GM12878 (cell line): ENCODE measurements at regions of chr1 and their contacts with region 1.

Region 1: GRCh38 chr1:99751877-99752504 is 14.4 kb downstream of the FRRS1 start:
- DNase-seq: peak; percentile 73
- ATAC-seq: peak; percentile 77
- H3K4me3 ChIP-seq: no peak overlapping the region
- H3K27ac ChIP-seq: peak overlapping the region; percentile 80
- H3K4me1 ChIP-seq: peaks cover 32% of the 10 kb centered on the region
- H3K27me3 ChIP-seq: no peaks in the 10 kb centered on the region
- CTCF ChIP-seq: no peak
- EP300 ChIP-seq: no peak; a peak in 1 of 4 replicates
- POLR2A ChIP-seq: no peak
- RAD21 ChIP-seq: no peak

Region 2: DNA sequence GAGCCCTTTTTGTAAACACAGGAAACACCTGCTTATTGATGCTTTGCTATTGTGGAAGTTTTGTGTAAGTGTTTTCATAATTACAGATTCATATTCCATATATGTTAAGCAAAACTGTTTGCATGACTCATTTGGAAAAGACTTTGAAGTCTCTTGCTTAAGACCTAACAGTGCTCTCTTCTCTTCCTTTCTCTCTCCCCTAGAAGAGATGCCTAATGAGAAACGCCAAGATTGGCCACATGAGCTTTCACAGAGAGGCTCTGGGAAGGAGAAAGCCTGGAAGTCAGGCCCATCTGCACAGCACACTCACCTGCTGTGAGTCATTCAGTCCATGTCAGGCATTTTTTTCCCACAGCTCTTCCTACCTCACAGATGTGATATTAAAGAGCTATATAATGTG is 207.7 kb before region 1 on chr1:
- CTCF ChIA-PET with region 1: no interaction called
- POLR2A ChIA-PET with region 1: no interaction called
- RAD21 ChIA-PET with region 1: no interaction called
- SMC1A ChIA-PET with region 1: no interaction called
- in situ Hi-C with region 1: no loop called
- intact Hi-C with region 1: no loop called
- DNase-seq: no peak
- ATAC-seq: peak; percentile 58
- H3K4me3 ChIP-seq: no peak overlapping the region
- H3K27ac ChIP-seq: no peak overlapping the region
- H3K4me1 ChIP-seq: no peaks in the 10 kb centered on the region; the same call in 1 of the 2 replicates
- H3K27me3 ChIP-seq: no peaks in the 10 kb centered on the region
- CTCF ChIP-seq: no peak
- EP300 ChIP-seq: no peak
- POLR2A ChIP-seq: no peak
- RAD21 ChIP-seq: no peak

Region 3: GRCh38 chr1:99645699-99646531 is 106.1 kb before region 1 on chr1 and contains the start of gene PALMD:
- CTCF ChIA-PET with region 1: no interaction called
- POLR2A ChIA-PET with region 1: no interaction called
- RAD21 ChIA-PET with region 1: no interaction called
- SMC1A ChIA-PET with region 1: no interaction called
- in situ Hi-C with region 1: no loop called
- intact Hi-C with region 1: no loop called
- DNase-seq: no peak
- ATAC-seq: peak; percentile 54
- H3K4me3 ChIP-seq: no peak within 1 kb of the TSS
- H3K27ac ChIP-seq: no peak within 1 kb of the TSS
- H3K4me1 ChIP-seq: no peaks in the 10 kb centered on the region
- H3K27me3 ChIP-seq: 0 out of 4 replicates have a peak, but pooled peaks cover 0 to 3% of the 10 kb centered on the region in 2 experiments
- CTCF ChIP-seq: no peak
- EP300 ChIP-seq: no peak
- POLR2A ChIP-seq: no peak
- RAD21 ChIP-seq: no peak
- polyA plus RNA-seq, gene PALMD: 0.03 TPM in 1 of 2 experiments, not detected in the other

Region 4: GRCh38 chr1:99738858-99739465 is 13.0 kb before region 1 on chr1:
- CTCF ChIA-PET with region 1: interaction called, 3 read pairs
- POLR2A ChIA-PET with region 1: interaction called, 10 read pairs
- RAD21 ChIA-PET with region 1: interaction called, 4 read pairs
- SMC1A ChIA-PET with region 1: interaction called, 11 read pairs
- in situ Hi-C with region 1: no loop called
- intact Hi-C with region 1: no loop called
- DNase-seq: no peak
- ATAC-seq: no peak
- H3K4me3 ChIP-seq: no peak overlapping the region
- H3K27ac ChIP-seq: no peak overlapping the region
- H3K4me1 ChIP-seq: no peaks in the 10 kb centered on the region
- H3K27me3 ChIP-seq: no peaks in the 10 kb centered on the region
- CTCF ChIP-seq: no peak
- EP300 ChIP-seq: no peak
- POLR2A ChIP-seq: no peak
- RAD21 ChIP-seq: no peak

Region 5: DNA sequence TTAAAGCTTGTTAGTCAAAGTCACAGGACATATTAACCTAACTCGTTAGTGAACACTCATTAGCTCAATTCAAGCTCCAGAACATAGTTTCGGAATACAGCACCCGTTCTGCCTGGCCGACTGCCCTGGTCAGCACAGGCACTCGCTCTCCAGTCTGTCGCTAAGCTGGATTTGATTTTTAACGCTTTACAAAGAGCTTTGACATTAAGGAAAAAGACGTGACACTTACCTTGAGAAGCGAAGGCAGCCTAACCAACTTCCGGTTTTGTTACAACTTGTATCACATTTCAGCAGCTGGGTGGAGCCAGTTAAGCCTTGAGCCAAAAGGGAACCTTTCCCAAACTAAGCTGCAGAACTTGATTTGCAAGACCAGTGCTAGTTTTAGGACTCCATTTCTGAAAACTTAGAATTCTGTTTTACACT is 14.4 kb after region 1 on chr1 and contains the start of gene FRRS1:
- CTCF ChIA-PET with region 1: interaction called, 40 read pairs
- POLR2A ChIA-PET with region 1: interaction called, 17 read pairs
- RAD21 ChIA-PET with region 1: interaction called, 25 read pairs
- SMC1A ChIA-PET with region 1: interaction called, 99 read pairs
- in situ Hi-C with region 1: no loop called
- intact Hi-C with region 1: no loop called
- DNase-seq: peak; percentile 85
- ATAC-seq: peak; percentile 86
- H3K4me3 ChIP-seq: peak within 1 kb of the TSS; percentile 96
- H3K27ac ChIP-seq: peak within 1 kb of the TSS; percentile 90
- H3K4me1 ChIP-seq: peaks cover under 1% of the 10 kb centered on the region; the same call in 1 of the 2 replicates
- H3K27me3 ChIP-seq: no peaks in the 10 kb centered on the region
- CTCF ChIP-seq: peak in 2 of 3 experiments; percentile 5 to 19; a peak in 2 of 6 replicates
- EP300 ChIP-seq: no peak
- POLR2A ChIP-seq: peak; percentile 58
- RAD21 ChIP-seq: peak; percentile 13; the same call in 1 of the 2 replicates
- polyA plus RNA-seq, gene FRRS1: 0.22 to 0.55 TPM

Region 6: GRCh38 chr1:99811075-99811474 is 59.1 kb after region 1 on chr1:
- CTCF ChIA-PET with region 1: no interaction called
- POLR2A ChIA-PET with region 1: no interaction called
- RAD21 ChIA-PET with region 1: no interaction called
- SMC1A ChIA-PET with region 1: no interaction called
- in situ Hi-C with region 1: no loop called
- intact Hi-C with region 1: no loop called
- DNase-seq: no peak
- ATAC-seq: no peak
- H3K4me3 ChIP-seq: no peak overlapping the region
- H3K27ac ChIP-seq: no peak overlapping the region
- H3K4me1 ChIP-seq: peaks cover 10% of the 10 kb centered on the region
- H3K27me3 ChIP-seq: no peaks in the 10 kb centered on the region
- CTCF ChIP-seq: no peak
- EP300 ChIP-seq: no peak
- POLR2A ChIP-seq: no peak
- RAD21 ChIP-seq: no peak

Region 7: GRCh38 chr1:99829269-99829668 is 77.3 kb after region 1 on chr1:
- CTCF ChIA-PET with region 1: no interaction called
- POLR2A ChIA-PET with region 1: no interaction called
- RAD21 ChIA-PET with region 1: no interaction called
- SMC1A ChIA-PET with region 1: no interaction called
- in situ Hi-C with region 1: no loop called
- intact Hi-C with region 1: no loop called
- DNase-seq: no peak
- ATAC-seq: no peak
- H3K4me3 ChIP-seq: no peak overlapping the region
- H3K27ac ChIP-seq: no peak overlapping the region
- H3K4me1 ChIP-seq: no peaks in the 10 kb centered on the region
- H3K27me3 ChIP-seq: no peaks in the 10 kb centered on the region
- CTCF ChIP-seq: no peak
- EP300 ChIP-seq: no peak
- POLR2A ChIP-seq: no peak
- RAD21 ChIP-seq: no peak